Activated CD4-positive, alpha-beta memory T cell treated with anti-CD3 and anti-CD28 coated beads, Interleukin-2, amount 10 ng/mL, durations not matched to agents 7 days and 5 days (primary cell): ENCODE measurements at regions of chr6 and their contacts with region 1.

Region 1: DNA sequence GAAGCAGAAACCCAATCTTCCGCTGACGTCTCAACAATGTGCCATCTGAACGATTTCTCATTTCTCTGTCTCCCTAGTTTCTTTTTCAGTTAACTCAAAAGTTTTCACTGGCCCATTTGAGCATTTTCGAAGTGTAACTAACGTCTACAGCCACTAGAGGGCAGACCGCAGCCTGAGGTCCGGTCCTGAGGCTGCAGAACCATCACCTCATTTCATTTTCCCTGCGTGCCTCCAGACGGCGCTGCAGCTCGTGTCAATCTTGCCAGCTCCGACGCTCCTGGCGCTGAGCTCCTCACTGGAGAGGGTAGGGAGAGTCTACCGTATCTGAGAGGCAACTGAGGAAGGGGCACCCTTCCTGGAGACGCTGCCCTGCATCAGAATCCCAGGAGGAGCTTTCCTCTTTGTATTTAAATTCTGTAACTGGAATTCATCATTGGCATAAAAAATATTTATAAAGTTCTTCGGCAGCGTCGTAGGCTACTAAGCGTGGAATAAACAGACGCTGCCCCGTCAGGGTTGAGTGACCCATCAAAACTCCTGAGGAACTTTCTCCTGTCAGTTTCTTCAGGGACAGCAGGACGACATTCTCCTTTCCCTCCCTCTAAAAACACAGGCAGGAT is 28.5 kb upstream of the DTNBP1 start:
- DNase-seq: peak; percentile 84
- H3K4me3 Mint-ChIP-seq: no peak overlapping the region
- H3K27ac Mint-ChIP-seq: peak overlapping the region; percentile 2
- H3K4me1 Mint-ChIP-seq: peaks cover 10% of the 10 kb centered on the region
- H3K27me3 Mint-ChIP-seq: peaks cover 6% of the 10 kb centered on the region

Region 2: DNA sequence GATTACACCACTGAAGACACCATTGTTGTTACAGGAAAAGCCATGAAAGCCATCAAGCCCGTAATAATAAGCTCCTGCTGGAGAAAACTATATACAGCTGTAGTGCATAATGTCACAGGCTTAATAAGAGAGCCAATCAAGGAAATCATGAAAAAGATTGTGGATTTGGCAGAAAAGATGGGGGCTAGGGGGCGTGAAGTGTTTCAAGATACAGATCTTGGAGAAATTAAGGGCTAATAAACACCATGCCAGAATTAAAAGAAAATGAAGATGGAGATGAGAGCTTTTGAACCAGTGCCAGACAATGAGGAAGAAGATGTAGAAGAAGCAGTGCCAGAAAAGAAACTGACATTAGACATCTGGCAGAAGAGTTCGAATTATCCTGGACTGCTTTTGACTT is 14.6 kb after region 1 on chr6:
- CTCF ChIA-PET with region 1: interaction called, 19 read pairs
- POLR2A ChIA-PET with region 1: no interaction called
- DNase-seq: no peak
- H3K4me3 Mint-ChIP-seq: no peak overlapping the region
- H3K27ac Mint-ChIP-seq: no peak overlapping the region
- H3K4me1 Mint-ChIP-seq: no peaks in the 10 kb centered on the region
- H3K27me3 Mint-ChIP-seq: peaks cover 8% of the 10 kb centered on the region

Region 3: DNA sequence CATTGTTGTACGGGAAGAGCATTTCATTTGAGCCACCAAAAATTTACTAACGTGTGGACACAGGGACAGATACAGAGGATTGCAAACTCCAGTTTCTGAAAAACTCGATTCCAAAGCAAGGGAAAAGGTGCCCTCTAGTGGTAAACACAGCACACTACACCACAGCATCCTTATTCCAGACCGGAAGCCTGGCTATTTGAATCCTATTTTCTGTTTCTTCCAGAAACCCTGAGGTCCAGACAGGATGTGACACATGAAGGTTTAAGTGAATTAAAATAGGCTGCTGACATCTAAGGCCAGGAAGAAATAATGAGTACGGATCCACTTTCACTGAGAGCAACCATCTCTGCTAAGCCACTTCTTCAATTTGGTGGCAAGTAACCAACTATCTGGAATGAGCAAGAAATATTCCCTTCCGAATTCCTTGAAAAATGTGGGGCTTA is 515.3 kb after region 1 on chr6:
- CTCF ChIA-PET with region 1: interaction called, 41 read pairs
- POLR2A ChIA-PET with region 1: interaction called, 3 read pairs
- DNase-seq: peak; percentile 42
- H3K4me3 Mint-ChIP-seq: no peak overlapping the region
- H3K27ac Mint-ChIP-seq: no peak overlapping the region
- H3K4me1 Mint-ChIP-seq: peaks cover 2% of the 10 kb centered on the region
- H3K27me3 Mint-ChIP-seq: peaks cover 26% of the 10 kb centered on the region